ENCODE measurements at regions of chr15 and their contacts with region 1.

Region 1: DNA sequence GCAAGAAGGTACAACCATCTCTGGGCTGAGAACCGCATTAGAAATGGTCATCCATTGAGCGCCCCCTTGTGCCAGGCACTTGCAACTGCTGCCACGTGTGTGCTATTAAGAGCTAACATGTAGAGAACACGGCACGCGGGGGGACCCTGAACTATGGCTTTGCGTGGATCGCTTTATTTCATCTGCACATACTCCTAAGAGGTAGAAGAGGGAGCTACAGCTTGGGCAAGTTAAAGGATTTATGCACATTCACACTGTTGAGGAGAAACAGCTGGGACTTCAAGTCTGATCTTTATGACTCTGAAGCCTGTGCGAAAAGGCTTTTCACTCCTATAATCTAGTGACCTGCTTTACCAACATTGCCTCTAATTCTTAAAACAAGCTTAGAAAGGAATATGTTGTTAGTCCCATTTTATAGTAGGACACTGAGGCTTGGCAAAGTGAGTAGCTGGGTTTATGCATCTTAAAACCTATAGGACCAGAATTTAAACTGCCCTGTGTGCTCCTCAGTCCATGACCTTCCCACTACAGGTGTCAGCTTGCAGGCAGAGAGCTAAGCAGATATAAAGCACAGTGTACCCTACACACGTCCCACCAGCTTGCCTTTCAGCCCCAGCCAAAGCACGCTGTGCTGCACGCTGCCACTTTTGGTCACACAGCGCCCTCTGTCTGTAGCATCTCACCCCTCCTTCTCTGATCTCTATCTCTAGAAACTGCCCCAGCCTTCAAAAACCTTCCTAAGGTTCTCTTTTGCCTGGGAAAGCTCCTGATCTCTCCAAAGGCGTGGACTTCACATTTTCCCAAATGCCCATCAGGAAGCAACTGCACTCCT is 57.8 kb downstream of the STARD5 start:
- DNase-seq: peak; percentile 71 to 75 (median 73)
- H3K4me3 ChIP-seq: peak overlapping the region in 1 of 2 donors; percentile 9
- H3K4me3 Mint-ChIP-seq: peak overlapping the region; percentile 66 to 90 (median 79)
- H3K27ac ChIP-seq: no peak overlapping the region
- H3K27ac Mint-ChIP-seq: peak overlapping the region in 5 of 7 donors; percentile 11 to 65 (median 32)
- H3K4me1 ChIP-seq: peaks cover 12% of the 10 kb centered on the region
- H3K4me1 Mint-ChIP-seq: peaks cover 12 to 16% (median 14%) of the 10 kb centered on the region in 4 donors
- H3K27me3 ChIP-seq: no peaks in the 10 kb centered on the region
- H3K27me3 Mint-ChIP-seq: peaks cover 1 to 4% of the 10 kb centered on the region in 2 donors

Region 2: DNA sequence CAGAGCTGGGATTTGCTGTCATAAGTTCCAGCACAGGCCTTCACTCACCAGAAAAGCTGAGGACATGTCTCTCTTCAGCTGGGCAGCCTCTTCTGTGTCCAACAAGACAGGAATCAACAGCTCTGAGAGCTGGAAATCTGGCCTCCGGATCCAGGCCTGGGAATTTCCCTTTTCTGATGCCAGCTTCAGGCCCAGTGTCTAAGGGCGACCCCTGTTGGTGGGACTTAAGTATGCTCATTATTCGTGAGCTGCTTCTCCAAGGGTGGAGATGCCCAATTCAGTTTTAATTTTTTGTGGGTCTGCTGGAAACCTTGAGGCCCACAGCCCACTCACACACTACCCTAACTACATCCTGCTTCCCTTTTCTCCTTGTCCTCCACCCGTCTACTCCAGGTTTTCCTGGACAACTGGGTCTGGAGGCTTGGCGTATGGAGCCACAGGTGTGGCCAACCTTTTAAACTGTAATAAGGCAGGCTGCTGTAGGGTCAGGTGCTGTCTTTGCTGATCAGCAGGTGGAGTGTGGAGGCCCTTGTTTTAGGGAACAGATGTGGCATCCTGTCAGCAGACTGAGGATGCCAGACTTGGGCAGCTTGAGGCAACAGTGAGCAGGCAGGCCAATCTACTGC is 489.6 kb before region 1 on chr15:
- CTCF ChIA-PET with region 1: interaction called, 12 read pairs
- POLR2A ChIA-PET with region 1: no interaction called
- intact Hi-C with region 1: no loop called
- DNase-seq: peak; percentile 39 to 58 (median 44)
- H3K4me3 ChIP-seq: no peak overlapping the region
- H3K4me3 Mint-ChIP-seq: no peak overlapping the region
- H3K27ac ChIP-seq: no peak overlapping the region
- H3K27ac Mint-ChIP-seq: no peak overlapping the region
- H3K4me1 ChIP-seq: peaks cover 5% of the 10 kb centered on the region
- H3K4me1 Mint-ChIP-seq: peaks cover 3 to 10% (median 5%) of the 10 kb centered on the region in 4 donors
- H3K27me3 ChIP-seq: peaks cover 22% of the 10 kb centered on the region
- H3K27me3 Mint-ChIP-seq: peaks cover 9 to 28% of the 10 kb centered on the region in 2 donors

Region 3: DNA sequence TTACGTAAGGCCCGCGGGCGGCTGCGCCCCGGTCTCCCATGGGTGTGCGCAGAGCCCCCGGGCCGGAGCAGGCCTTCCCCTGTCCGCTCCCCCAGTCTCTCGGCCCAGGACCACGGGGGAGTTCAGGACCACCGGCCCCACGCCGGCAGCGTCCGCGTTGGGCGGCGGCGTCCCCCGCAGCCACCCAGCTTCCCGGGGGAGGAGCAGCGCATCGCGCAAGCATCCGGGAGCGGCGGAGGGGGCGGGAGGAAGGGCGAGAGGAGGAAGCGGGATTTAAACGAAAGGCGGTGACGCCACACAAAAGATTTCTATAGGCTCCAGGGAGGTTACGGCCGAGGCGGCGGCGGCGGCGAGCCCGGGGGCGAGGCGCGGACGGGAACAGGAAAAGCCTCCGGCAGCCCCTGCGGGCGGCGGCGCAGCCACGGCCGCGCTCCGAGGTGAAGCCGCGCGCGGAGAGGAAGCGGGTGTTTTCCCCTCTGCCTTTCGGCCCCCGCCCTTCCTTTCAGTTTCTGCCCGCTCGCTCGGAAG is 265.5 kb before region 1 on chr15 and contains the start of gene TLNRD1:
- CTCF ChIA-PET with region 1: interaction called, 45 read pairs
- POLR2A ChIA-PET with region 1: interaction called, 6 read pairs
- intact Hi-C with region 1: loop called (anchors 1 kb)
- DNase-seq: peak; percentile 85 to 89 (median 87)
- H3K4me3 ChIP-seq: peak within 1 kb of the TSS; percentile 39 to 91
- H3K4me3 Mint-ChIP-seq: peak within 1 kb of the TSS; percentile 93 to 98 (median 96)
- H3K27ac ChIP-seq: peak within 1 kb of the TSS; percentile 95
- H3K27ac Mint-ChIP-seq: peak within 1 kb of the TSS; percentile 97 to 99 (median 98)
- H3K4me1 ChIP-seq: peaks cover 42% of the 10 kb centered on the region
- H3K4me1 Mint-ChIP-seq: peaks cover 34 to 63% (median 53%) of the 10 kb centered on the region in 4 donors
- H3K27me3 ChIP-seq: no peaks in the 10 kb centered on the region
- H3K27me3 Mint-ChIP-seq: peaks cover 0 to 1% of the 10 kb centered on the region in 2 donors
- total RNA-seq, gene TLNRD1: 29.7 to 29.8 TPM

Region 4: GRCh38 chr15:81242778-81243177 is 23.4 kb before region 1 on chr15:
- CTCF ChIA-PET with region 1: interaction called, 12 read pairs
- POLR2A ChIA-PET with region 1: interaction called, 3 read pairs
- intact Hi-C with region 1: no loop called
- DNase-seq: no peak
- H3K4me3 ChIP-seq: no peak overlapping the region
- H3K4me3 Mint-ChIP-seq: no peak overlapping the region
- H3K27ac ChIP-seq: no peak overlapping the region
- H3K27ac Mint-ChIP-seq: no peak overlapping the region
- H3K4me1 ChIP-seq: no peaks in the 10 kb centered on the region
- H3K4me1 Mint-ChIP-seq: no peaks in the 10 kb centered on the region
- H3K27me3 ChIP-seq: no peaks in the 10 kb centered on the region
- H3K27me3 Mint-ChIP-seq: peaks cover 2 to 4% of the 10 kb centered on the region in 2 donors

Region 5: DNA sequence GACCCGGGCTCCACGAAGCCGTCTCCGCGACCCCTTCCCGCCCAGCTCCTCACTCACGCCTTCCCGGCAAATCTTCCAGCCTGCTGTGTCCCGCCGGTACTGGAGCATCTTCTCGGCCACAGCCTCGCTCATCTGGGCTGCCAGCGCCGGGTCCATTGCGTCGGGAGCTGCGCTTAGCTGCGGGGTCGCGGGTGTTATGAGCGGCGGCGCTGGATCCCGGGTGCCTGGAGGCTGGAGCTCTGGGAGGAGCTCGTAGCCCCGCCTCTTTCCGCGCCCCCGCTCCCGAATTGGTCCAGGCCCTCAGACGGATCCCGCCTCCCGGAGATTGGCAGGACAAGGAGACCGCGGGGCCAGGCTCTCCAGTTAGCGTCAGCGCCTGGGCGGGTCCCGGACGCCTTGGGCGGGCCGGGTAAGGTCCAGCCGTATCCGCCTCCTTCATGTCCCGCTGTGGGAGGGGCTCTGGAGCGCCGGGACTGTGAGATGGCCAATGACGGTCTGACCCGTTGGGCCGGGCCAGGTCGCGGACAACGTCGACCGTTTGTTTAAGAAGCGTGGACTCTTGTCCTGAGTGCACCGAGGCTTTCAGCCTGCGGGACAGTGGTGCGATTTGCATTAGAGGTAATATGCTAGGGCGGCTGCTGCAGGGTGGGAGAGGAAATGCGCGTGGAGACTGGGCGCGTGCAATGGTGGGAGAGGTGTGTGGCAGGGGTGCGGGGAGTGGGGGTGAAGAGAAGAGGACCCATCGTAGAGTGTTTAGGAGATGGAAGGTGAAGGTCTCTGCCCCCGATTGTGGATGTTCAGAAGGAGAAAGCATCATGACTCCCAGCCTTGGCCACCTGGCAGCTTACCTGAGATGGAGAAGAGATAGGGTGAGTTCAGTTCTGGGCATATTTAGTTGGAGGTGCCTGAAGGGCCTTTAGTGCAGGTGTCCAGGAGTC is 58.1 kb after region 1 on chr15 and contains the start of gene STARD5:
- CTCF ChIA-PET with region 1: interaction called, 19 read pairs
- POLR2A ChIA-PET with region 1: no interaction called
- intact Hi-C with region 1: no loop called
- DNase-seq: peak; percentile 91 to 95 (median 92)
- H3K4me3 ChIP-seq: peak within 1 kb of the TSS; percentile 76 to 87
- H3K4me3 Mint-ChIP-seq: peak within 1 kb of the TSS; percentile 92 to 99 (median 96)
- H3K27ac ChIP-seq: peak within 1 kb of the TSS; percentile 55
- H3K27ac Mint-ChIP-seq: peak within 1 kb of the TSS; percentile 83 to 97 (median 94)
- H3K4me1 ChIP-seq: peaks cover 29% of the 10 kb centered on the region
- H3K4me1 Mint-ChIP-seq: peaks cover 19 to 33% (median 25%) of the 10 kb centered on the region in 4 donors
- H3K27me3 ChIP-seq: no peaks in the 10 kb centered on the region
- H3K27me3 Mint-ChIP-seq: no peaks in the 10 kb centered on the region
- total RNA-seq, gene STARD5: 5.0 to 8.0 TPM

Region 6: DNA sequence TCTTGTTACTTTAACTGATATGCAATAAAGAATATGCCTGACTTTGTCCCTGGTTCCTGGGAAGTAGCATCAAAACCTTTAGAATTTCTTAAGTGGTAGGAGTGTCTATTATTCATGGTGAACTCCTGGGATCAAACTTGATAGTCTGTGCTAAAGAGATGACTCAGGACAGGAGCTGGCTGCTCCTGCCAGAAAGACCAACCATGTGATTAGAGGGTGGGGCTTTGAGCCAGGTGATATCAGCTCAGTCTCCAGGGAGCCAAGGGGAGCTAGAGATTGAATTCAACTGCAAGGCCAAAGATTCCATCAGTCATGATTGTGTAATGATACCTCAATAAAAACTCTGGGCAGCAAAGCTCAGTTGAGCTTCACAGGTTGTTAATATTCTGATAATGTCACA is 128.4 kb after region 1 on chr15:
- CTCF ChIA-PET with region 1: interaction called, 147 read pairs
- POLR2A ChIA-PET with region 1: no interaction called
- intact Hi-C with region 1: no loop called
- DNase-seq: no peak
- H3K4me3 ChIP-seq: no peak overlapping the region
- H3K4me3 Mint-ChIP-seq: no peak overlapping the region
- H3K27ac ChIP-seq: no peak overlapping the region
- H3K27ac Mint-ChIP-seq: no peak overlapping the region
- H3K4me1 ChIP-seq: no peaks in the 10 kb centered on the region
- H3K4me1 Mint-ChIP-seq: no peaks in the 10 kb centered on the region
- H3K27me3 ChIP-seq: no peaks in the 10 kb centered on the region
- H3K27me3 Mint-ChIP-seq: no peaks in the 10 kb centered on the region

Measured in CD4-positive, alpha-beta memory T cell (primary cell).